Activated CD4-positive, alpha-beta memory T cell treated with anti-CD3 and anti-CD28 coated beads for 36 hours (primary cell): ENCODE measurements at regions of chrX and their contacts with region 1.

Region 1: GRCh38 chrX:75156021-75156945 is at the start of gene ABCB7:
- DNase-seq: peak; percentile 71
- H3K4me3 Mint-ChIP-seq: peak within 1 kb of the TSS; percentile 96
- H3K27ac Mint-ChIP-seq: peak within 1 kb of the TSS; percentile 92
- H3K4me1 Mint-ChIP-seq: peaks cover 40% of the 10 kb centered on the region
- H3K27me3 Mint-ChIP-seq: no peaks in the 10 kb centered on the region
- total RNA-seq, gene ABCB7: 45.6 to 47.5 TPM

Region 2: DNA sequence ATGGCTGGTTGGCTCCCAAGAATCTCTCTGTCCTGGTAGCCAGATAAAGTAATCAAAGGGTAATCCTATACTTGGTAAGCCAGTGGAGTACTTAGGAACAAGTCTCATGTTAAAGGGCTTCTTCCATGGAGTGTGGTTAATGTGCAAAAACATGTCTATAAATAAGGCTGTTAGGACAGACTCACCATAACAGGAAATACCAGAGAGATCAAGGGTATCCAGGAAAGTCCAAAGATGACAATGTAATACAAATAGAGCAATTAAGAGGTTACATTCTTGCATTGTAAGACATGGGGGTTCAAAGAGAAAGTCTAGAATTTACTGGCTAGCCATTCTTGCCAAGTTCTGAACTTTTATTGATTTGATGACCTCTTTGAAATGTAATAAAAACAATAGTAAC is 914.2 kb before region 1 on chrX:
- CTCF ChIA-PET with region 1: no interaction called
- POLR2A ChIA-PET with region 1: no interaction called
- intact Hi-C with region 1: no loop called
- DNase-seq: no peak
- H3K4me3 Mint-ChIP-seq: no peak overlapping the region
- H3K27ac Mint-ChIP-seq: no peak overlapping the region
- H3K4me1 Mint-ChIP-seq: peaks cover 3% of the 10 kb centered on the region
- H3K27me3 Mint-ChIP-seq: no peaks in the 10 kb centered on the region

Region 3: DNA sequence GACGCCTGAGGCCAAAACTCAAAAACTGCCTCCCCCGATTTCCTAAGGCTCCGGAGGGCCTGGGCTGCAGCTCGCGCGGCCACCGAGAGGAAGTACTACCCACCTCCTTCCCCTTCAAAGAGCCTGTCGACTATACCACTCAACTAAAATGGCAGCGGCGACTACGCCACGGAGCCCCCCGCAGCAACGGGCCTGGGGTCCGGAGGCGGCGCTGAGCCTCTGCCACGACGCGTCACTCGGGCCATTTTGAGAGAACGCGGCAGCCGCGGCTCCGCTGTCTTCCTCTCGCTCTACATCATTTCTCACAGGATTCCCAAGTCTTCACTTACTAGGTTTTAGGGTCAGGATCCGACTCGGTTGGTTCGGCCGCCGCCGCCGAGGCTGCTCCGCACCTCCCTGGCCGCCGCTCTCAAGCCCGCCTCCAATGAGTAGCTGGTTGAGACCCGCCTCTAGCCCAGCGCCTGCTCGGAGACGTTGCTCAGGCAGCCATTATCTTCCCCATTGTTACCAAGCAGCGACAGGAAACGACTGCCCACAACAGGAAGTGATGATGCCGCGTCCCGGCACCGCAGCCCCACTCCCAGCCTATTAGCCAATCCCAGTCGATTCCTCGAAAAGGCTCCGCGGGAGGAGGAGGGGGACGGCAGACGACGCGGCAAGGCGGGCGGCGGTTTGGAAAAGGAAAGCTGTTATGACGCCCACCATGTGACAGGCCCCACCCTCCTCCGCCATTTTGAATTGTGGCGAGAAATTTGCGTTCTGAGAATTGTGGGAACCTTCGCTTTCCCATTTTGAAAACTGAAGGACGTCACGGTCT is 542.0 kb before region 1 on chrX and contains the start of gene RLIM:
- CTCF ChIA-PET with region 1: no interaction called
- POLR2A ChIA-PET with region 1: no interaction called
- intact Hi-C with region 1: loop called (anchors 1 kb)
- DNase-seq: peak; percentile 95
- H3K4me3 Mint-ChIP-seq: peak within 1 kb of the TSS; percentile 98
- H3K27ac Mint-ChIP-seq: peak within 1 kb of the TSS; percentile 99
- H3K4me1 Mint-ChIP-seq: peaks cover 12% of the 10 kb centered on the region
- H3K27me3 Mint-ChIP-seq: no peaks in the 10 kb centered on the region
- total RNA-seq, gene RLIM: 36.6 to 37.5 TPM

Region 4: GRCh38 chrX:74804574-74804973 is 351.7 kb before region 1 on chrX:
- CTCF ChIA-PET with region 1: no interaction called
- POLR2A ChIA-PET with region 1: no interaction called
- intact Hi-C with region 1: no loop called
- DNase-seq: no peak
- H3K4me3 Mint-ChIP-seq: no peak overlapping the region
- H3K27ac Mint-ChIP-seq: no peak overlapping the region
- H3K4me1 Mint-ChIP-seq: no peaks in the 10 kb centered on the region
- H3K27me3 Mint-ChIP-seq: no peaks in the 10 kb centered on the region

Region 5: DNA sequence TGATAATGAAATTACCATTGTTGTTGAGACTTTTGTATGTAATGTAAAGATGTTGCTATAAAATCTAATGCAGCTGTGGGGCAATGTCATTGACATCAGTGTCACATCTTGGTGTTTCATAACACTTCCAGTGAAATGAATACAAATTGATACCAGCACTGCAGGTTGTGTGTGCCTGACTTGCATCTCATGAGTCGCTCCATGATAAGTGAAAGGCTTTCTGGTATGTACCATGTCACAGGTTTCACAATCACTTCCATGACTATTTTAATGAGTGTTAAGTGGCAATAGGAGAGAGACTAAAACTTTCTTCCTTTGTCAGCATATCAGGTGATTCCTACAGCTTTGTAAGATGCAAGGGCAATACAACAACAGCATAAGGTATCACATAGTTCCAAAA is 94.6 kb before region 1 on chrX:
- CTCF ChIA-PET with region 1: no interaction called
- POLR2A ChIA-PET with region 1: no interaction called
- intact Hi-C with region 1: loop called (anchors 5 kb)
- DNase-seq: peak; percentile 12
- H3K4me3 Mint-ChIP-seq: no peak overlapping the region
- H3K27ac Mint-ChIP-seq: peak overlapping the region; percentile 36
- H3K4me1 Mint-ChIP-seq: peaks cover 6% of the 10 kb centered on the region
- H3K27me3 Mint-ChIP-seq: no peaks in the 10 kb centered on the region

Region 6: GRCh38 chrX:75273483-75273882 is 117.2 kb after region 1 on chrX:
- CTCF ChIA-PET with region 1: interaction called, 3 read pairs
- POLR2A ChIA-PET with region 1: interaction called, 3 read pairs
- intact Hi-C with region 1: loop called (anchors 1 kb)
- DNase-seq: no peak
- H3K4me3 Mint-ChIP-seq: peak overlapping the region; percentile 90
- H3K27ac Mint-ChIP-seq: peak overlapping the region; percentile 92
- H3K4me1 Mint-ChIP-seq: peaks cover 39% of the 10 kb centered on the region
- H3K27me3 Mint-ChIP-seq: no peaks in the 10 kb centered on the region

Region 7: GRCh38 chrX:75522565-75523431 is 366.5 kb after region 1 on chrX and contains the start of gene ZDHHC15:
- CTCF ChIA-PET with region 1: no interaction called
- POLR2A ChIA-PET with region 1: no interaction called
- intact Hi-C with region 1: loop called (anchors 5 kb)
- DNase-seq: peak; percentile 70
- H3K4me3 Mint-ChIP-seq: peak within 1 kb of the TSS; percentile 80
- H3K27ac Mint-ChIP-seq: peak within 1 kb of the TSS; percentile 42
- H3K4me1 Mint-ChIP-seq: peaks cover 20% of the 10 kb centered on the region
- H3K27me3 Mint-ChIP-seq: no peaks in the 10 kb centered on the region
- total RNA-seq, gene ZDHHC15: 0.14 to 0.22 TPM

Region 8: DNA sequence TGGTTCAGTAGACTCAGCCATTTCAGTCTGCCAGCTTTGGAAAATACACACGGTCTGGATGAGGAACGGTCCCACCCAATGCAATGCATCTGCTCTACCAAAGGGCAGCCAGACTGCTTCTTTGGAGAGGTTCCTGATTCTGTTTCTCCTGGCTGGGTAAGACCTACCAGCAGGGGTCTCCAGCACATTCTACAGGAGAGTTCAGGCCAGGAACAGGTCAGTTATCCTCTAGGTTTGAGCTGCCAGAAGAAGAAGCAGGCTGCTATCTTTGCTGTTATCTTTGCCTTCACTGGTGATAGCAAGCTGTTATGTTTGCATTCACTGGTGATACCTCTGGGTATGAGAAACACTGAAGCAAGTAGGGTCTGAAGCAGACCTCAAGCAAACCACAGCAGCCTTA is 971.1 kb after region 1 on chrX:
- CTCF ChIA-PET with region 1: no interaction called
- POLR2A ChIA-PET with region 1: no interaction called
- intact Hi-C with region 1: no loop called
- DNase-seq: no peak
- H3K4me3 Mint-ChIP-seq: no peak overlapping the region
- H3K27ac Mint-ChIP-seq: no peak overlapping the region
- H3K4me1 Mint-ChIP-seq: no peaks in the 10 kb centered on the region
- H3K27me3 Mint-ChIP-seq: peaks cover 5% of the 10 kb centered on the region

Region 9: DNA sequence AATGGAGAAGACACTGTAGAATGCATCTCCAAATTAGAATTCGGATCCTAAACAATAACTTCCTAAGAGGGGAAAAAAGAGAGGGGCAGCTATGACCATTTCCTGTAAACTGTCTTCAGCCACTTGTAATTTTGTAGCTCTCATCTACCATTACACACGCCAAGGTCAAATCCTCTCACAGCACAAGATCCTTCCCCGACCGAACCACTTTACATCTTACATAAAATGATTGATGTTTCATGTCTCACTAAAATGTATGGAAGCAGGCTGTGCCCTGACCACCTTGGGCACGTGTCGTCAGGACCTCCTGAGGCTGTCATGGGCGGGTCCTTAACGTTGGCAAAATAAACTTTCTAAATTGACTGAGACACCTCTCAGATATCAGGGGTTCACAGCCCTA is 992.5 kb after region 1 on chrX:
- CTCF ChIA-PET with region 1: no interaction called
- POLR2A ChIA-PET with region 1: no interaction called
- intact Hi-C with region 1: loop called (anchors 5 kb)
- DNase-seq: peak; percentile 57
- H3K4me3 Mint-ChIP-seq: peak overlapping the region; percentile 74
- H3K27ac Mint-ChIP-seq: peak overlapping the region; percentile 99
- H3K4me1 Mint-ChIP-seq: peaks cover 11% of the 10 kb centered on the region
- H3K27me3 Mint-ChIP-seq: no peaks in the 10 kb centered on the region